Activated CD4-positive, alpha-beta T cell treated with anti-CD3 and anti-CD28 coated beads for 36 hours (primary cell): ENCODE measurements at regions of chr6 and their contacts with region 1.

Region 1: DNA sequence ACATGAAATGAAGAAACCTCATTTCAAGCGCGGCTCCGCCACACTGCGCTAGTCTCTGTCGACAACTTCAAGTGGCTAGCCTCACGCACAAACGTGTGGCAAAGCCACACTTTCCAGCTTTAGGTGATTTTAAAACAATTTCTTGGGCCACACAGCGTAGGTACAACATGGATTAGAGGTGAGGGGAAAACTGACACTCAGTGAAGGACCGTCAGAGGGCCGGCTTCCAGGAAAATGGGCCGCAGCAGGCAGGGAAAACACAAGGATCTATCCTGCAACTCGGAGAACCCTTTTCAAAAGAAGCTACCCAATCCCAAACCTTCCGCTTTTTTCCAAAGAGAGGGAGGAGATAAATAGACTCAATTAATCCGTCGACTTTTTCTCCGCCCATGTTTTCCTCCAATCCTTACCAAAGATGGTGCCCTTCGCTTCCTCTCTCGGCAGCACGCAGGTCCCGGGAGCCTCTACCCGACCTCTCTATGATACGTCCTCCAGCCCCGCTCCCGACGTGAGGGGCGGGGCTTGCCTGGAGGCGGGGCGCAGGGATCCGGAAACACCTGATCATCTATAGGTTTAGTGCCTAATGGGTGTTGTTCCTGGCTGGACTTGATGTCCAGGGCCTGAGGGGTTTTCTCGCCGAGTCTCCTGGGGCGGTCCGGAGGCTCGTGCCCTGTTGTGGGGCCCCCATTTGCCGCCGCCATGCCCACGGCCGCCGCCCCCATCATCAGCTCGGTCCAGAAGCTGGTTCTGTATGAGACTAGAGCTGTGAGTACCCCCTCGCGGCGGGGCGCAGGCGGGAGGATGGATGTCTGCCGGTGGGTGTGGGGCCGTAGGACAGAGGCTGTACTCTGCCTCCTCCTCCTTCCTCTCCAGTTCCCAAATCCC is at the starts of genes AK9 and FIG4:
- DNase-seq: peak; percentile 95
- ATAC-seq: peak; percentile 94
- H3K4me3 Mint-ChIP-seq: peak within 1 kb of the TSS; percentile 94
- H3K27ac Mint-ChIP-seq: peak within 1 kb of the TSS; percentile 92
- H3K4me1 Mint-ChIP-seq: peaks cover 38% of the 10 kb centered on the region
- H3K27me3 Mint-ChIP-seq: no peaks in the 10 kb centered on the region
- total RNA-seq, gene AK9: 3.5 to 5.2 TPM
- total RNA-seq, gene FIG4: 14.4 to 17.5 TPM

Region 2: GRCh38 chr6:108294727-108295625 is 1396.0 kb before region 1 on chr6 and contains the start of gene AFG1L:
- CTCF ChIA-PET with region 1: no interaction called
- POLR2A ChIA-PET with region 1: no interaction called
- intact Hi-C with region 1: loop called in 1 of 2 experiments (anchors 2 kb)
- DNase-seq: peak; percentile 93
- ATAC-seq: peak; percentile 92
- H3K4me3 Mint-ChIP-seq: peak within 1 kb of the TSS; percentile 99
- H3K27ac Mint-ChIP-seq: peak within 1 kb of the TSS; percentile 100
- H3K4me1 Mint-ChIP-seq: peaks cover 13% of the 10 kb centered on the region
- H3K27me3 Mint-ChIP-seq: no peaks in the 10 kb centered on the region
- total RNA-seq, gene AFG1L: 6.6 TPM

Region 3: DNA sequence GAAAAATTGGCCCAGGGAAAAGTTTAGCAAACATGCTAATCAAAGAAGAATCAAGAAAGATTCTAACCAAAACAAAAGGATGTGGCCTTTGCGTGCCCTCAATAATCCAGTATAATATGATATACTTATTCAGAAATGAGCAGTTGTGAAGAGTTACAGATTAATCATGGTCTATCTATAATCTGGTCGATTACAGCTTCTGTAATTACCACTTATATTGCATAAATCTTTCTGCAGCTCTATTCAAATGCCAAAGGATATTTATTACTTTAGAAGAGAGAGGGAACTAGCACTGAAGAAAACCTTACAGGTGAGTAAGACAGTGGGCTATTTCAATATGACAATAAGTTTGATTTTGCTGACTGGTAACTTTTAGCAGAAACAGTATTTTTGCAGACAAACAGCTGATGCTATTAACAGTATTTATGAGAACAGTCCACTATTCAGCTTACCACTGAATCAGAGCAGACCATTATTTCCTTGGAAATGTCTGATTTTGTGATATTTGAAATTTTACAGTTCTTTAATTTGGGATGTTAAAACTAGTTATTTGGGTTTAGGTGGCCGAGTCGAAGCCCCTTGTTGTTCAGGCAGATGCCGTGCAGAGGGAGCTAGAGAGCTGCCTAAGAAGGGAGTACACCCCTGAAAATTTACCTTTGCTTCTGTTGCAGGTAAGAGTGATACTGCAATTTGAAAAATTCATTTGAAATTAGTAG is 503.4 kb before region 1 on chr6:
- CTCF ChIA-PET with region 1: interaction called, 3 read pairs
- POLR2A ChIA-PET with region 1: no interaction called
- intact Hi-C with region 1: loop called in 1 of 2 experiments (anchors 5 kb)
- DNase-seq: peak; percentile 75
- ATAC-seq: peak; percentile 81
- H3K4me3 Mint-ChIP-seq: no peak overlapping the region
- H3K27ac Mint-ChIP-seq: no peak overlapping the region
- H3K4me1 Mint-ChIP-seq: peaks cover 3% of the 10 kb centered on the region
- H3K27me3 Mint-ChIP-seq: peaks cover 18% of the 10 kb centered on the region

Region 4: GRCh38 chr6:109482905-109483735 is 207.9 kb before region 1 on chr6 and contains the start of gene ZBTB24:
- CTCF ChIA-PET with region 1: no interaction called
- POLR2A ChIA-PET with region 1: no interaction called
- intact Hi-C with region 1: loop called (anchors 1 to 2 kb)
- DNase-seq: peak; percentile 94
- ATAC-seq: peak; percentile 84
- H3K4me3 Mint-ChIP-seq: peak within 1 kb of the TSS; percentile 96
- H3K27ac Mint-ChIP-seq: peak within 1 kb of the TSS; percentile 94
- H3K4me1 Mint-ChIP-seq: peaks cover 43% of the 10 kb centered on the region
- H3K27me3 Mint-ChIP-seq: no peaks in the 10 kb centered on the region
- total RNA-seq, gene ZBTB24: 12.0 to 14.7 TPM

Region 5: GRCh38 chr6:109595998-109596397 is 95.0 kb before region 1 on chr6:
- CTCF ChIA-PET with region 1: interaction called, 6 read pairs
- POLR2A ChIA-PET with region 1: no interaction called
- intact Hi-C with region 1: loop called (anchors 1 to 5 kb)
- DNase-seq: peak; percentile 44
- ATAC-seq: peak; percentile 75
- H3K4me3 Mint-ChIP-seq: no peak overlapping the region
- H3K27ac Mint-ChIP-seq: no peak overlapping the region
- H3K4me1 Mint-ChIP-seq: peaks cover 8% of the 10 kb centered on the region
- H3K27me3 Mint-ChIP-seq: no peaks in the 10 kb centered on the region

Region 6: DNA sequence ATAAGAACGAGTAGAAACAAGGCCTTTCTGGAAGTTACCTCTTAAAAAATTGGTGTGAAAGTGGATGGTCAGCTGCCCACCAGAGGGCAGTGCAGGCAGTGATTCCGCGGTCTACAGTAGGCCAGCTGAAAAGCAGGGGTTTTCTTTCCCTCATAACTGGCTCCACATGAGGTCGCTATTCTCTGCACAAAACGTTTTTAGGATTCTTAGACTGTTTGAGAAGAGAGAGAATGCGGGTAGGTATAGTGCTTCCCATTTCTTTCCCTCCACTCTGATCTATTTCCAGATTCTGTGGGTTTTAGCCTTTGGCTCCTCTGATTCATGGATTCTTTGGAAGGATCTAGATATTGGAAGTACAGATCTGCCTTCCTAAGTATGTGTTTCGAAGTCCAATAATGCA is 14.3 kb after region 1 on chr6:
- CTCF ChIA-PET with region 1: interaction called, 11 read pairs
- POLR2A ChIA-PET with region 1: no interaction called
- intact Hi-C with region 1: no loop called
- DNase-seq: peak; percentile 88
- ATAC-seq: peak; percentile 99
- H3K4me3 Mint-ChIP-seq: no peak overlapping the region
- H3K27ac Mint-ChIP-seq: no peak overlapping the region
- H3K4me1 Mint-ChIP-seq: peaks cover 12% of the 10 kb centered on the region
- H3K27me3 Mint-ChIP-seq: no peaks in the 10 kb centered on the region

Region 7: GRCh38 chr6:110958329-110959192 is 1267.6 kb after region 1 on chr6 and contains the start of gene GTF3C6:
- CTCF ChIA-PET with region 1: no interaction called
- POLR2A ChIA-PET with region 1: no interaction called
- intact Hi-C with region 1: loop called in 1 of 2 experiments (anchors 5 kb)
- DNase-seq: peak; percentile 97
- ATAC-seq: peak; percentile 100
- H3K4me3 Mint-ChIP-seq: peak within 1 kb of the TSS; percentile 90
- H3K27ac Mint-ChIP-seq: peak within 1 kb of the TSS; percentile 97
- H3K4me1 Mint-ChIP-seq: peaks cover 14% of the 10 kb centered on the region
- H3K27me3 Mint-ChIP-seq: peaks cover 1% of the 10 kb centered on the region
- total RNA-seq, gene GTF3C6: 93.0 to 106 TPM